Naive thymus-derived CD4-positive, alpha-beta T cell (primary cell): ENCODE measurements at regions of chr20 and their contacts with region 1.

Region 1: DNA sequence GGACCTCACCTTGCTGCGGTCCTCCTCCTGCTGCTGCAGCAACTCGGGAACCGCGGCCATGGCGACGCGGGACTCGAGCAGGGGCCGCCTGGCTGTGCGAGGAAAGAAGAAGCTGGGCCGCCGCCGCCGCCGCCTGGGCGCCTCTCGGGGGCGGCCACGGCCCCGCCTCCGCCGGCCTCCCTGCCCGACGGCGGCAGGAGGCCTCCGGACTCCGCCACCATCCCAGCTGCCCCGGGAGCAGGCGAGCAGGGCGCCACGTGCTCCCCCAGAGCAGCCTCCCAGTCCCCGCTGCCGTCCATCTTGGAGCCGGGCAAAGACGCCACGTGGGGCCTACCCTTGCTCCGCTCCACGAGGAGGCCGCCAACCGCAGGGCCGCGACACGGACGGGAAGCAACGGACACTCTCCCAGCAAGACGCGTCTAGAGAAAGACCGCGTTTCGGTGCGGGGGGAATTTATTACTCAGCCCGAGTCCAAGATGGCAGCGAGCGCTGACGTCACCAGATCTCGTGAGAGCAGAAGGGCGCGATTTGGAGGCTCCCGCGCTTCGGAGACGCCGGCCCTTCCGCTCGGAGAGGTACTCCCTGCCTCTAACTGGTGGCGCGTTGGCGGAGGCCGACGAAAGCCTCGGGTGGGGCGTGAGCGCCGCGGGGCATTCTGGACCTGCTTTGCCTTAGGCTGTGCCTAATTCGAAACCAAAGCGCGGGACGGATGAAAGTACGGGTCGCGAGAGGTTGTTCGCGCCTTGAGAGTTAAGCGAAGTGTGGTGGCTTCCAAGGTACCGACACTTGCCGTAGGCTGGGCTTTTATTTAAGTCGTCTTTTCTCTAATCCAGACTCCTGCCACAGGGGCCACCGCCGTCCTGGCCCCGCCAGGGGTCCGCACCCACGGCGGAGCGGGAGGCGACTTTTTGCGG is at the starts of genes MGME1 and SNX5:
- DNase-seq: peak; percentile 98 to 99 (median 99)
- ATAC-seq: peak; percentile 95
- H3K4me3 ChIP-seq: peak within 1 kb of the TSS; percentile 91
- H3K4me3 Mint-ChIP-seq: peak within 1 kb of the TSS; percentile 89 to 97 (median 94)
- H3K27ac ChIP-seq: peak within 1 kb of the TSS; percentile 96
- H3K27ac Mint-ChIP-seq: peak within 1 kb of the TSS; percentile 93 to 98 (median 97)
- H3K4me1 ChIP-seq: peaks cover 53 to 59% of the 10 kb centered on the region in 2 donors
- H3K4me1 Mint-ChIP-seq: peaks cover 54 to 76% (median 71%) of the 10 kb centered on the region in 7 donors
- H3K27me3 ChIP-seq: no peaks in the 10 kb centered on the region
- H3K27me3 Mint-ChIP-seq: no peaks in the 10 kb centered on the region
- total RNA-seq, gene MGME1: 4.9 to 41.0 (median 13.1) TPM
- total RNA-seq, gene SNX5: 41.4 to 148 (median 61.9) TPM

Region 2: GRCh38 chr20:16573001-16573965 is 1395.3 kb before region 1 on chr20 and contains the start of gene KIF16B:
- CTCF ChIA-PET with region 1: no interaction called
- POLR2A ChIA-PET with region 1: no interaction called
- intact Hi-C with region 1: loop called (anchors 5 kb)
- DNase-seq: peak; percentile 62 to 97 (median 76)
- ATAC-seq: peak; percentile 88
- H3K4me3 ChIP-seq: peak within 1 kb of the TSS; percentile 78
- H3K4me3 Mint-ChIP-seq: peak within 1 kb of the TSS; percentile 88 to 97 (median 92)
- H3K27ac ChIP-seq: peak within 1 kb of the TSS; percentile 61
- H3K27ac Mint-ChIP-seq: peak within 1 kb of the TSS; percentile 52 to 90 (median 85)
- H3K4me1 ChIP-seq: peaks cover 9 to 11% of the 10 kb centered on the region in 2 donors
- H3K4me1 Mint-ChIP-seq: peaks cover 16 to 61% (median 50%) of the 10 kb centered on the region in 7 donors
- H3K27me3 ChIP-seq: no peaks in the 10 kb centered on the region
- H3K27me3 Mint-ChIP-seq: peaks cover 0 to 8% (median 0%) of the 10 kb centered on the region in 5 donors
- total RNA-seq, gene KIF16B: 8.4 to 13.7 (median 11.0) TPM

Region 3: DNA sequence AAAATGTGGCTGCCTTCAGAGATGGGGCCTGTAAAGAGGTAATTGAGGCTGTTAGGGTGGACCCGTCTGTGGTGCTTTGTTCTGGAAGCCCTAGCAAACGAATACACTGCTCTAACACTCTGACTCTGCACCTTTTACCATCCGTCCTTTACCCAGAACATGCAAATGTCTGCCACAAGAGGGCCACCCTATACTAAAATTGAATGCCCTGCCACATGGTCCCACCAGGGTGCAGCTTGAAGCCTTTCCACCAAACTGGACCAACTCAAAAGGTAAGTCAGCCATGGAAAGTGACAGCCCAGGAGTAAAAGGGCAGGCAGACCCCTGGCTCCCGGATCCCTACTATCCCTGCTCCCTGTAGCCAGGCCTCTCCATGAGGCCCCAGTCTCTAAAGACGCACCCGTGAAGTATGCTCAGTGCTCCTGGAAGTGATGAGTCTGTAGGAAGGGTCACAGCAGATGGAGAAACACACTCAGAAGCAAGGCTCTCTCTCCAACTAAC is 431.6 kb before region 1 on chr20:
- CTCF ChIA-PET with region 1: no interaction called
- POLR2A ChIA-PET with region 1: no interaction called
- intact Hi-C with region 1: loop called in 1 of 2 experiments (anchors 10 kb)
- DNase-seq: peak; percentile 22 to 73 (median 65)
- ATAC-seq: peak; percentile 98
- H3K4me3 ChIP-seq: no peak overlapping the region
- H3K4me3 Mint-ChIP-seq: no peak overlapping the region
- H3K27ac ChIP-seq: no peak overlapping the region
- H3K27ac Mint-ChIP-seq: peak overlapping the region in 2 of 9 donors; percentile 50 to 52
- H3K4me1 ChIP-seq: peaks cover 0 to under 1% of the 10 kb centered on the region in 2 donors
- H3K4me1 Mint-ChIP-seq: peaks cover 0 to 39% (median 0%) of the 10 kb centered on the region in 7 donors
- H3K27me3 ChIP-seq: no peaks in the 10 kb centered on the region
- H3K27me3 Mint-ChIP-seq: peaks cover 10 to 30% (median 18%) of the 10 kb centered on the region in 5 donors

Region 4: DNA sequence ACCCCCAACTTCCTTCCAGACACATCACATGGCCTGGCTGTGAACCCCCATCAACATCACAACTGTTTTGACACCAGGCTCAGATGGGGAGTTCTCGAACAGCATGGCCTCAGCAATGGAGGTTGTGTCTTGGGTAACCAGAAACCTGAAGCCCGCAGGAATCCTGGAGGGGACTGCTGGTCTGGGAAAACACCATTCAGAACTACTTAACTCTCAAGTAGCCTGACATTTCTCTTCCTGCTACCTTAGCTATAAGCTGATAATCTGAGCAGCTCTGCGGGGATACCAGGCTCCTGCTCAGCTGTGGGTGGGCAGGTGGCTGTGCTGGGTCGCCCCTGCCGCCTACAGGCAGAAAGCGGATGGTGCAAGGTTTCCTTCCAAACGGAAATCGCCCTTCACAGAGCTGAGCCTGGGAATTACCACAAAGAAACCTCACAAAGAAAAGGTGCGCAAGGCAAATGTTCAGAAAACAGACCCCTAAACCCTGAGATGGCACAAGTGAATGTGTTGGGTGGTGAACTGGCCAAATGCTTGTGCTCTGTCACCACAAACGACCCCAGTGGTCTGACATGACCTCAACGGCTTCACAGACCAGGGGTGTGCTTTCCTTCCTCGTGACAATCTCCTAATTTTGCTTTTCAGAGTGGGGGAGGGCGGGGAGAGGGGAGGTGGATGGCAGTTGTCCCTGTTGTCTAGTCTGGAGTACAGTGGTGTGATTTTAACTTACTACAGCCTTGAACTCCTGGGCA is 29.6 kb before region 1 on chr20:
- CTCF ChIA-PET with region 1: no interaction called
- POLR2A ChIA-PET with region 1: no interaction called
- intact Hi-C with region 1: loop called (anchors 1 kb)
- DNase-seq: peak; percentile 18 to 53 (median 34)
- ATAC-seq: peak; percentile 91
- H3K4me3 ChIP-seq: no peak overlapping the region
- H3K4me3 Mint-ChIP-seq: peak overlapping the region in 6 of 10 donors; percentile 4 to 43 (median 37)
- H3K27ac ChIP-seq: no peak overlapping the region
- H3K27ac Mint-ChIP-seq: peak overlapping the region in 4 of 9 donors; percentile 34 to 68 (median 51)
- H3K4me1 ChIP-seq: peaks cover 5 to 9% of the 10 kb centered on the region in 2 donors
- H3K4me1 Mint-ChIP-seq: peaks cover 0 to 22% (median 12%) of the 10 kb centered on the region in 7 donors
- H3K27me3 ChIP-seq: no peaks in the 10 kb centered on the region
- H3K27me3 Mint-ChIP-seq: no peaks in the 10 kb centered on the region

Region 5: DNA sequence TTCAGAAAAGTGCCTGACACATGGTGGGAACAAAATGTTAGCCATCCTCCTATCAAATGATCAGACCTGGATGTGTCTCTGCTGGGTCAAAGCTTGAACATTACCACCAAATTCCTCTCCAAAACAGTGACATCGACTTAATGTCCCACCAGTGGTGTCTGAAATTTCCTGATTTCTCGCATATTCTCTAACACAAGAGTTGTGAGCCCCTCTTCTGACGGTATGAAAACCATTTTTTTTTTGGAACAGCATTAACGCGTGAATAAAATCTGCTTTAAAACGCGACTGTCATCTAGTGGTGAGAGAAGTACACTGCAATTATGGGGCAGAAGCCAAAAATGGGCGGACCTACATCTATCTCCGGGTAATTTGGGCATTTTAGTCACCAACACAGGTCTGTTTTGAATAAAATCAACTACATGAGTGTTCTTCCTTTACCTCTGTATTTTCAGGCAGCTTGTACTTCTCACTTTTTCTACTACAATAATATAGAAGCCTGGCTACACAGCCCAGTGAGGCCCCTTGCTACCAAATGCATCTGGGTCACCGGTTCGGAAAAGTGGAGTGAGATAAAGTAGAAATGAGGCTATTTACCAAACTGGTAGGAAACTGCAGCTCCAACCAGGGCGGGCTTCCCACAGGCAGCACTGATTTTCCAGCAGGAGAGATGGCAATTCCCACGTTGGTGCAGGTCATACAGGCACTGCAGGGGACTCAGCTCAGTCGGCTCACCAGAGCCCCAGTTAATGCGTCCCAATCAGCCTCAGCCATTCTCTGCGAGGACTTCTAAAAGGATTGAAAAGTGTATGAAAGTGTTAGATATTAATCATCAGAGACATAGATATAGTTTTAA is 27.6 kb after region 1 on chr20:
- CTCF ChIA-PET with region 1: interaction called, 12 read pairs
- POLR2A ChIA-PET with region 1: interaction called, 5 read pairs
- intact Hi-C with region 1: loop called (anchors 1 kb)
- DNase-seq: peak in 7 of 9 donors; percentile 35 to 68 (median 59)
- ATAC-seq: peak; percentile 94
- H3K4me3 ChIP-seq: no peak overlapping the region
- H3K4me3 Mint-ChIP-seq: no peak overlapping the region
- H3K27ac ChIP-seq: no peak overlapping the region
- H3K27ac Mint-ChIP-seq: peak overlapping the region in 1 of 9 donors; percentile 48
- H3K4me1 ChIP-seq: peaks cover 0 to 8% of the 10 kb centered on the region in 2 donors
- H3K4me1 Mint-ChIP-seq: peaks cover 4 to 45% (median 6%) of the 10 kb centered on the region in 7 donors
- H3K27me3 ChIP-seq: no peaks in the 10 kb centered on the region
- H3K27me3 Mint-ChIP-seq: peaks cover 3 to 13% (median 8%) of the 10 kb centered on the region in 5 donors

Region 6: DNA sequence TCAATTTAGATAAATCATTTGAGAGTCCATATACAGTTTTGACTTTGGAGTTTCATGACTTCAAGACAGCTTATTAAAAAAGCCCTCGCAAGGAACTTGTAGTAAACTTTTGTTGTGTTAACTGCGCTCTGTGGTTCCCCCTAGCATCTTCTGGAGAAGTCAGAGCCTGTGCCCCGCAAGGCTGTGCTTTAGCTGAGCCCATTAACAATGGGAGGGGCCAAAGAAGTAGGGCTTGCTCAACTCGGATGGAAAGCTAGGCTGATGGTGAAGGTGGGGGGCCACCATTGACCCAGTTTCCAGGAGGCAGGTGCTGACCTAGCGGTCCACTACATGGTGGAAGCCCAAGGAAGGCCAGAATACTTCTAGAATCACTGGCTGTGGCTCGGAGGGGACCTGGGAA is 118.4 kb after region 1 on chr20:
- CTCF ChIA-PET with region 1: no interaction called
- POLR2A ChIA-PET with region 1: no interaction called
- intact Hi-C with region 1: no loop called
- DNase-seq: no peak
- ATAC-seq: no peak
- H3K4me3 ChIP-seq: no peak overlapping the region
- H3K4me3 Mint-ChIP-seq: no peak overlapping the region
- H3K27ac ChIP-seq: no peak overlapping the region
- H3K27ac Mint-ChIP-seq: no peak overlapping the region
- H3K4me1 ChIP-seq: no peaks in the 10 kb centered on the region
- H3K4me1 Mint-ChIP-seq: no peaks in the 10 kb centered on the region
- H3K27me3 ChIP-seq: no peaks in the 10 kb centered on the region
- H3K27me3 Mint-ChIP-seq: peaks cover 0 to 17% (median 3%) of the 10 kb centered on the region in 5 donors

Region 7: DNA sequence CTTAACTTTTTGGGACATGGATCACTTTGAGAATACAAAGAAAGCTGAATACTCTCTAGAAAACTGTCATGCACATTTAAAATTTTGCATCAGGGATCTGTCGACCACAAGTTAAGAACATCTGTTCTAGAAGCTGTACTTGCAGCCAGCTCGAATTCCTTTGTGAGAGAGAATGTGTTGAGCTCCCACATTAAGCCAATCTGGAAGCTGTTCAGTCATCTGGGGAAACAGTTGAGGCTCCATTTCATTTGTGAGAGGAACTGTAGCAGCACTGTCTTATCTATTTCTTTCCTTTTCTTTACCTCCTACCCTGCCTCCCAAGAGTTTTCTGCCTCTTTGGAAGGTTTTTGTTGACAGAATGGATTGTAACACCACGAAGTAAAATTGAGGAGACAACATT is 219.8 kb after region 1 on chr20:
- CTCF ChIA-PET with region 1: no interaction called
- POLR2A ChIA-PET with region 1: no interaction called
- intact Hi-C with region 1: no loop called
- DNase-seq: no peak
- ATAC-seq: no peak
- H3K4me3 ChIP-seq: no peak overlapping the region
- H3K4me3 Mint-ChIP-seq: no peak overlapping the region
- H3K27ac ChIP-seq: no peak overlapping the region
- H3K27ac Mint-ChIP-seq: peak overlapping the region in 4 of 9 donors; percentile 15 to 66 (median 58)
- H3K4me1 ChIP-seq: no peaks in the 10 kb centered on the region
- H3K4me1 Mint-ChIP-seq: peaks cover 0 to 11% (median 6%) of the 10 kb centered on the region in 7 donors
- H3K27me3 ChIP-seq: no peaks in the 10 kb centered on the region
- H3K27me3 Mint-ChIP-seq: no peaks in the 10 kb centered on the region

Region 8: GRCh38 chr20:18404172-18404571 is 435.5 kb after region 1 on chr20:
- CTCF ChIA-PET with region 1: no interaction called
- POLR2A ChIA-PET with region 1: no interaction called
- intact Hi-C with region 1: no loop called
- DNase-seq: no peak
- ATAC-seq: no peak
- H3K4me3 ChIP-seq: no peak overlapping the region
- H3K4me3 Mint-ChIP-seq: no peak overlapping the region
- H3K27ac ChIP-seq: no peak overlapping the region
- H3K27ac Mint-ChIP-seq: no peak overlapping the region
- H3K4me1 ChIP-seq: no peaks in the 10 kb centered on the region
- H3K4me1 Mint-ChIP-seq: peaks cover 0 to 7% (median 0%) of the 10 kb centered on the region in 7 donors
- H3K27me3 ChIP-seq: no peaks in the 10 kb centered on the region
- H3K27me3 Mint-ChIP-seq: no peaks in the 10 kb centered on the region

Region 9: GRCh38 chr20:18466894-18467730 is 498.5 kb after region 1 on chr20 and contains the starts of genes DZANK1 and POLR3F:
- CTCF ChIA-PET with region 1: no interaction called
- POLR2A ChIA-PET with region 1: interaction called, 5 read pairs
- intact Hi-C with region 1: loop called (anchors 1 kb)
- DNase-seq: peak; percentile 85 to 93 (median 92)
- ATAC-seq: peak; percentile 97
- H3K4me3 ChIP-seq: peak within 1 kb of the TSS; percentile 93
- H3K4me3 Mint-ChIP-seq: peak within 1 kb of the TSS; percentile 89 to 99 (median 97)
- H3K27ac ChIP-seq: peak within 1 kb of the TSS; percentile 77
- H3K27ac Mint-ChIP-seq: peak within 1 kb of the TSS; percentile 93 to 99 (median 98)
- H3K4me1 ChIP-seq: peaks cover 7 to 14% of the 10 kb centered on the region in 2 donors
- H3K4me1 Mint-ChIP-seq: peaks cover 25 to 44% (median 37%) of the 10 kb centered on the region in 7 donors
- H3K27me3 ChIP-seq: no peaks in the 10 kb centered on the region
- H3K27me3 Mint-ChIP-seq: no peaks in the 10 kb centered on the region
- total RNA-seq, gene DZANK1: 1.2 to 3.5 (median 2.9) TPM
- total RNA-seq, gene POLR3F: 5.0 to 13.5 (median 11.5) TPM

Region 10: GRCh38 chr20:18587665-18588573 is 619.3 kb after region 1 on chr20 and contains the start of gene DTD1:
- CTCF ChIA-PET with region 1: no interaction called
- POLR2A ChIA-PET with region 1: no interaction called
- intact Hi-C with region 1: loop called in 1 of 2 experiments (anchors 2 kb)
- DNase-seq: peak; percentile 29 to 93 (median 53)
- ATAC-seq: peak; percentile 92
- H3K4me3 ChIP-seq: peak within 1 kb of the TSS; percentile 68
- H3K4me3 Mint-ChIP-seq: peak within 1 kb of the TSS; percentile 83 to 99 (median 91)
- H3K27ac ChIP-seq: peak within 1 kb of the TSS; percentile 74
- H3K27ac Mint-ChIP-seq: peak within 1 kb of the TSS; percentile 80 to 94 (median 91)
- H3K4me1 ChIP-seq: peaks cover 0 to 4% of the 10 kb centered on the region in 2 donors
- H3K4me1 Mint-ChIP-seq: peaks cover 16 to 39% (median 27%) of the 10 kb centered on the region in 7 donors
- H3K27me3 ChIP-seq: no peaks in the 10 kb centered on the region
- H3K27me3 Mint-ChIP-seq: peaks cover 0 to 11% (median 9%) of the 10 kb centered on the region in 5 donors
- total RNA-seq, gene DTD1: 12.7 to 24.4 (median 16.6) TPM